Colonic mucosa (tissue), 4 donors: ENCODE measurements at regions of chr20 and their contacts with region 1.

Region 1: GRCh38 chr20:18632196-18633009 is 44.5 kb downstream of the DTD1 start:
- DNase-seq: peak; percentile 64
- H3K4me3 ChIP-seq: no peak overlapping the region
- H3K27ac ChIP-seq: no peak overlapping the region
- H3K4me1 ChIP-seq: no peaks in the 10 kb centered on the region
- H3K27me3 ChIP-seq: no peaks in the 10 kb centered on the region
- CTCF ChIP-seq: peak; percentile 85

Region 2: GRCh38 chr20:18589941-18590674 is 42.3 kb before region 1 on chr20:
- intact Hi-C with region 1: no loop called
- DNase-seq: no peak
- H3K4me3 ChIP-seq: no peak overlapping the region
- H3K27ac ChIP-seq: no peak overlapping the region
- H3K4me1 ChIP-seq: peaks cover 3% of the 10 kb centered on the region
- H3K27me3 ChIP-seq: no peaks in the 10 kb centered on the region
- CTCF ChIP-seq: no peak

Region 3: DNA sequence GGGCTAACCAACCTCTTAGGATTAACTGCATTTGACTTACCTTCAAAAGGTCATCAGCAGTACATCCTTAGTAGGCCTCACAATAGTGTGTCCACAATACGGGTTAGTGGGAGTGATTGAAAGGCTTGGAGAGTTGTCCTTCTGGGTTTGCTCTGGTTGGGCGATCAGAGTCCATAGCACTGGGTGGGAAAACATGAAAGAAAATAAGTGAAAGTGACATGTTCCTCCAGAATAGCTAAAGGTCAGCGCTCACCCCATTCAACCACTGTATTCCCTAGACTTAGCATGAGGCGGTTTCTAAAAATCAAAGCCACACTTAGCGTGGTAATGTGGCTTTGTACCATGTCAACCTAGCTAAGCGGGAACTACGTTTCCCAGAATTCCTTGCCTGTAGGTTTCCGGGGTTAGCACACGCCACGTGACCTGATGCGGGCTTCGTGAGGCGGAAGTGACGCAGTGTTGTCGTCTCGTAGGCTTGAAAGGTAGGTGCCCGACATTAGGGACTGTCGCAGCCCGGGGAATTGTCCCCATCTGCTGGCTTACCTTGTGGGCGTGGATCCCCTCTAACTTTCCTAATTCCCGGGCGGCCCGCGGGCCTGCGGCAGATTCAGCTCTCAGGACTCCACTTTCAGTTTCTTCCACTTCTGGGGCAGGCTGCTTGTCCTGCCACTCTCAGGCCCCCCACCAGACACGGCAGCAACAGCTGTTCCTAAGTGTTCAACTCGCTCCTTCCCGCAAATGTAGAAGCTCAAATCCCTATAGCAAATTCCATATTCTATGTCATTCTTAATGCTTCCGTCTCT is 161.4 kb after region 1 on chr20:
- intact Hi-C with region 1: loop called (anchors 10 kb)
- DNase-seq: peak; percentile 90
- H3K4me3 ChIP-seq: peak overlapping the region; percentile 73
- H3K27ac ChIP-seq: peak overlapping the region; percentile 83
- H3K4me1 ChIP-seq: no peaks in the 10 kb centered on the region
- H3K27me3 ChIP-seq: no peaks in the 10 kb centered on the region
- CTCF ChIP-seq: no peak

Region 4: DNA sequence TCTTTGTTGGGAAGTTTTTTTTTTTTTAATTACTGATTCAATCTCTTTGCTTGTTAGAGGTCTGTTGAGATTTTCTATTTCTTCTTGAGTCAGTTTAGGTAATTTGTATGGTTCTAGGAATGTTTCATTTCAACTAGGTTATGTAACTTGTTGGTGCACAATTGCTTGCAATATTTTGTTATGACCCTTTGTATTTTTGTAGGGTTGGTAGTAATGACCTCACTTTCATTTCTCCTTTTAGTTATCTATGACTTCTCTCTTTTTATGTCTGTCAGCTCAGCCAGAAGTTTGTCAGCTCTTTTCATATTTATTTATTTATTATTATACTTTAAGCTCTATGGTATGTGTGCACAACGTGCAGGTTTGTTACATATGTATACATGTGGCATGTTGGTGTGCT is 528.9 kb after region 1 on chr20:
- intact Hi-C with region 1: no loop called
- DNase-seq: no peak
- H3K4me3 ChIP-seq: no peak overlapping the region
- H3K27ac ChIP-seq: no peak overlapping the region
- H3K4me1 ChIP-seq: no peaks in the 10 kb centered on the region
- H3K27me3 ChIP-seq: no peaks in the 10 kb centered on the region
- CTCF ChIP-seq: no peak

Region 5: DNA sequence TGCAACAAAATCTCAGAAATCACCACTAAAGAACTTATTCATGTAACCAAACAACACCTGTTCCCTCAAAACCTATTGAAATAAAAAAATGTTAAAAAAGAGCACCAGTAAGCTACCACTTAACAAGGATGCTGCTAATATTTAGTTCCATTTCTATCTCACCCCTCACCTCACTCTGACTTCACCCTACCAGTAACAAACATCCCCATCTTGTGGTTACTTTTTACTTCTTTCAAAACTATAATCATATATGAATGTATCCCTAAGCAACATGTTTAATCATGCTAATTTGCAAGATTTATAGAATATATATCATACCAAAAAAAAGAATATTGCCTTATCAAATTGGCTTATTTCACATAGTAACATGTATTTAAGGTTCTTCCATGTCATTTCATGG is 552.7 kb after region 1 on chr20:
- intact Hi-C with region 1: loop called (anchors 10 kb)
- DNase-seq: no peak
- H3K4me3 ChIP-seq: no peak overlapping the region
- H3K27ac ChIP-seq: no peak overlapping the region
- H3K4me1 ChIP-seq: no peaks in the 10 kb centered on the region
- H3K27me3 ChIP-seq: no peaks in the 10 kb centered on the region
- CTCF ChIP-seq: no peak

Region 6: DNA sequence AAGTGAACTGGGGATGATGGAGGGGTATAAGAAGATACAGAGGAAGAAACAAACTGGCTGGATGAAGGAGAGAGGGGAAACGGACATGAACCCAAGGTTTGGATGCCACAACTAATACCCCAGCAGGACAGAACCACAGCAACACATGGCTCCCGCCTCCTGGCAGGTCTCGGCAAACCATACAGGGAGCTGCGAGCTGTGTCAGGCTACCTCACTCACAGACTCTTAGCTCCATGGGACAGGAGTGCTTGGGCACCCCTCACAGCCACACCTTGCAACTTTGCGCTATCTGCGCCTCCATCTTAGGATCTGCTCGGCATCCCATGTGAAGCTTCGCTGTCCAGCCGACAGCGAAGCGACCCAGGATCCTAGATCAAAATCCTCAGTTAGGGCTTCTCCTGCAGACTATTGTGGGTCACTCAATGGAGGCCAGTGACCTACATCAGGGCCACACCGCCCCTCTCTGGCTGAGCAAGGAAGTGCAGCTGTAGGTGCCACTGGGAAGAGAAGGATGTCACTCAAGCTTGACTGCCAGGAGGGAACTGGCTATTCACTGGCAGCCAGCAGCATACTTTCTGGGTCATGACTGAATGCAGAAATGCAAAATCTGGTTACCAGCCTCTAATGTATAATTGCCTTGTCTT is 951.3 kb after region 1 on chr20:
- intact Hi-C with region 1: loop called (anchors 10 kb)
- DNase-seq: peak; percentile 68
- H3K4me3 ChIP-seq: no peak overlapping the region
- H3K27ac ChIP-seq: no peak overlapping the region
- H3K4me1 ChIP-seq: no peaks in the 10 kb centered on the region
- H3K27me3 ChIP-seq: no peaks in the 10 kb centered on the region
- CTCF ChIP-seq: peak; percentile 75

Region 7: GRCh38 chr20:19764207-19764606 is 1131.8 kb after region 1 on chr20:
- intact Hi-C with region 1: no loop called
- DNase-seq: no peak
- H3K4me3 ChIP-seq: no peak overlapping the region
- H3K27ac ChIP-seq: no peak overlapping the region
- H3K4me1 ChIP-seq: no peaks in the 10 kb centered on the region
- H3K27me3 ChIP-seq: no peaks in the 10 kb centered on the region
- CTCF ChIP-seq: no peak